Common myeloid progenitor, CD34-positive (primary cell): ENCODE measurements at regions of chr4 and their contacts with region 1.

Region 1: GRCh38 chr4:48047421-48047844 is 30.9 kb downstream of the NIPAL1 start:
- DNase-seq: peak; percentile 70 to 92 (median 89)
- H3K4me3 ChIP-seq: peak overlapping the region in 3 of 7 experiments; percentile 21 to 49 (median 34)
- H3K27ac ChIP-seq: no peak overlapping the region
- H3K4me1 ChIP-seq: peaks cover 13 to 25% (median 19%) of the 10 kb centered on the region in 4 experiments
- H3K27me3 ChIP-seq: peaks cover 0 to 15% (median 0%) of the 10 kb centered on the region in 5 experiments

Region 2: DNA sequence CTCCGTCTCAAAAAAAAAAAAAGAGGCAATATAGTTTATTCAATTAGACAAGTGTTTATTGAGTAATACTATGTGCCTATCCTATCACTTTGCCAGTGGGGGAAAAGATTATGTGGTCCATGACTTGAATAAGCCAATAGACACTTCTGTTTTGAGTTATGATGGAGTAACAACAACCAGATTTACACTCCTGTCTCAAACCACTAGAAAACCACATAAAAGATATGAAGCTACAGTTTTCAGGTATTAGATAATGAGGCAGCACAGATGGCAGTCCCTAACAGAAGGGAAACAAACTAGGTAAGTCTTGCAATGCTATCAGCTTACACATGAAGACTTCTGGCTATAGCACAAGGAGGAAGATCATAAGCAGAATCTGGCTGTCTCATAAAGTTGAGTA is 155.5 kb before region 1 on chr4:
- CTCF ChIA-PET with region 1: no interaction called
- POLR2A ChIA-PET with region 1: no interaction called
- DNase-seq: no peak
- H3K4me3 ChIP-seq: no peak overlapping the region
- H3K27ac ChIP-seq: no peak overlapping the region
- H3K4me1 ChIP-seq: no peaks in the 10 kb centered on the region
- H3K27me3 ChIP-seq: no peaks in the 10 kb centered on the region

Region 3: DNA sequence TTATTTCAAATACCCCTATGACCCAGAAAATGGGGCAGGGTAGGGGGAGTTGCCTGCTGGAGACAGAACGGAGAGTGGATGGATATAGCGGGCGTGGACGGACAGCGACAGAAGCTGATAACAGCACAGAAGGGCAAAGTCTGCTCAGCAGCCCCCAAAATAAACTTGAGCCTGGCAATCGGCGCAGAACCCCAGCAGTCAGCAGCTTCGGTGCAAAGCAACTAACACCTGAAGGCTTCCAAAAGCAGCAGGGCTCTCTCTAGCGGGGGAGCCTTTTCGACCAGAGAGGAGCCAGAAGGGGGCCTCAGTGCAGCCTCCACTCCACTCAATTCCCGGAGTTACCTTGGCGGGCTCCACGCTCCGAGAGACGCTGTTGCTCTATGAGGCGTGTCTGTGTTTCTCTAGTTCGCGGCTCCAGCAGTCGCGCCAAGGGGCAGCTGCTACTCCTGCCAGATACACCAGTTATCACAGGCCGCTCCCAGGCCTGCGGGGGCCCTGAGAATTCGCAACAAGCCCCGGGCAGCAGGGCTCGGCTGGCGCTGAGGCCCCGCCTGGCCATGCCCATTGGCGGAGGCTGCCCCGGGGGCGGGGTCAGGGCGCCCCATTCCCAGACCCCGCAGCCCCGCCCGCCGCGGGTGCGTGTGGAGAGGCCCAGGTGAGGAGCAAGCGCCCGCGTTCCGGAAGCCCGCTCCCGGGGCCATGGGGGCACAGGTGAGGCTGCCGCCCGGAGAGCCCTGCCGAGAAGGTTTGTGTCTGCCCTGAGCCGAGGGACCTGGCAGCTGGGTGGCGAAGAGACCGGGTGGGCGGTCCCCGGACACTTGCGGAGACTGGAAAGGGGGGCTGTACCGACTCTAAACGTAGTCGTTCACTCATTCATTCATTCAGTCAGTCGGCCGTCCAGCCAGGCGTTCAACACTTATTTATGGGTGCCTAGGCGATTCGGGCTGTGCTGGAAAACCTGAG is 31.0 kb before region 1 on chr4 and contains the starts of genes CNGA1 and NIPAL1:
- CTCF ChIA-PET with region 1: interaction called, 11 read pairs
- POLR2A ChIA-PET with region 1: no interaction called
- DNase-seq: peak; percentile 56 to 69 (median 57)
- H3K4me3 ChIP-seq: peak within 1 kb of the TSS; percentile 47 to 80 (median 74)
- H3K27ac ChIP-seq: no peak within 1 kb of the TSS
- H3K4me1 ChIP-seq: peaks cover 0 to 23% (median 15%) of the 10 kb centered on the region in 4 experiments
- H3K27me3 ChIP-seq: peaks cover 6 to 37% (median 9%) of the 10 kb centered on the region in 5 experiments

Region 4: GRCh38 chr4:48033825-48034413 is 13.5 kb before region 1 on chr4:
- CTCF ChIA-PET with region 1: interaction called, 13 read pairs
- POLR2A ChIA-PET with region 1: no interaction called
- DNase-seq: peak; percentile 39 to 80 (median 77)
- H3K4me3 ChIP-seq: no peak overlapping the region
- H3K27ac ChIP-seq: no peak overlapping the region
- H3K4me1 ChIP-seq: no peaks in the 10 kb centered on the region
- H3K27me3 ChIP-seq: no peaks in the 10 kb centered on the region